SK-N-SH (cell line): ENCODE measurements at regions of chr2 and their contacts with region 1.

Region 1: GRCh38 chr2:160252278-160252887 is 52.3 kb upstream of the ITGB6 start:
- DNase-seq: peak; percentile 51
- H3K4me3 ChIP-seq: no peak overlapping the region
- H3K27ac ChIP-seq: no peak overlapping the region; a peak in 1 of 4 replicates
- H3K4me1 ChIP-seq: peaks cover 0 to 16% of the 10 kb centered on the region in 2 experiments; a peak in 2 of 4 replicates
- H3K27me3 ChIP-seq: no peaks in the 10 kb centered on the region
- CTCF ChIP-seq: peak; percentile 84
- EP300 ChIP-seq: no peak
- RAD21 ChIP-seq: peak; percentile 70

Region 2: DNA sequence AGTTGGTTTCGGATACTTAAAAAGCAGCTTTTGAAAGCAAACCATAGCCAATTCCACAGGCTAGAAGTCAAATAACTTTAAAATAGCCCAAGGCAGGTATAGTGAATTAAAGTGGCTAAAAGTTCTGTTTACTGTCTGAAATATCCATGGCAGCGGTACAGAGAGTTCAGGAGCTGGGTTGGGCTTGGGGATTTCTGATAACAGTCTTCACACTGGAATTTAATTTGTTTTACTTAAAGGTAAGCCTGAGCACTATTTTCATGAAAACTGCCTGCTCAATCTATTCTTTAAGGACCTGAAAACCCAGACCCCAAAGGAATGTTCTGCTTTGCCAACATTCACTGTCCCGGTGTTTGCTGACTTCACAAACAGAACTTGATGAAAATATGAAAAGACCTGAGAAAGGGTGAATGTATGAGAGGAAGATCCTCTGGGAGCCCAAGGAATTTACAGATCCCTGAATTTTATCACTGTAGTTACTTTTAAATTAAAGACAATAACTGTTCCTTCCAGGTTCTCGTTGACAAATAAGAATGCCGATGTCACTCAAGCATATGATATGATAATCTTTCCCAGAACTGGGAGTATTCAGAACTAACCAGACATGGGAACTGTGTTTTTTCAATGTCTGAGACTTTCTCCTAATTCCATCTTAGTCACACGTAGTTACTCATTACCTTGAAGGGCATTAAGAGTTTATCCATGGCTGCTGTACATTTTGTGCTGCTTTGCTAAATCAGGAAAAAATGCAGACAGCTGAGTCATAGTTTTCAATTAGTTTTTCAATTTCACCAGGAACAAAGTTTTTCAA is 24.1 kb before region 1 on chr2:
- CTCF ChIA-PET with region 1: interaction called, 10 read pairs
- POLR2A ChIA-PET with region 1: no interaction called
- DNase-seq: no peak
- H3K4me3 ChIP-seq: no peak overlapping the region
- H3K27ac ChIP-seq: peak overlapping the region; percentile 96 to 98
- H3K4me1 ChIP-seq: peaks cover 36 to 63% of the 10 kb centered on the region in 2 experiments
- H3K27me3 ChIP-seq: no peaks in the 10 kb centered on the region
- CTCF ChIP-seq: no peak
- EP300 ChIP-seq: peak; percentile 57 to 95
- RAD21 ChIP-seq: no peak

Region 3: GRCh38 chr2:160241251-160242137 is 10.9 kb before region 1 on chr2:
- CTCF ChIA-PET with region 1: interaction called, 32 read pairs
- POLR2A ChIA-PET with region 1: no interaction called
- DNase-seq: peak; percentile 45
- H3K4me3 ChIP-seq: no peak overlapping the region
- H3K27ac ChIP-seq: peak overlapping the region; percentile 87 to 93
- H3K4me1 ChIP-seq: peaks cover 19 to 24% of the 10 kb centered on the region in 2 experiments; a peak in 3 of 4 replicates
- H3K27me3 ChIP-seq: no peaks in the 10 kb centered on the region
- CTCF ChIP-seq: no peak
- EP300 ChIP-seq: peak; percentile 63 to 96; a peak in 3 of 4 replicates
- RAD21 ChIP-seq: no peak

Region 4: GRCh38 chr2:160278879-160279177 is 26.4 kb after region 1 on chr2:
- CTCF ChIA-PET with region 1: interaction called, 11 read pairs
- POLR2A ChIA-PET with region 1: no interaction called
- DNase-seq: peak; percentile 12
- H3K4me3 ChIP-seq: no peak overlapping the region; a peak in 1 of 4 replicates
- H3K27ac ChIP-seq: peak overlapping the region; percentile 65 to 81
- H3K4me1 ChIP-seq: peaks cover 9 to 43% of the 10 kb centered on the region in 2 experiments
- H3K27me3 ChIP-seq: no peaks in the 10 kb centered on the region
- CTCF ChIP-seq: peak; percentile 62
- EP300 ChIP-seq: no peak
- RAD21 ChIP-seq: peak; percentile 40

Region 5: DNA sequence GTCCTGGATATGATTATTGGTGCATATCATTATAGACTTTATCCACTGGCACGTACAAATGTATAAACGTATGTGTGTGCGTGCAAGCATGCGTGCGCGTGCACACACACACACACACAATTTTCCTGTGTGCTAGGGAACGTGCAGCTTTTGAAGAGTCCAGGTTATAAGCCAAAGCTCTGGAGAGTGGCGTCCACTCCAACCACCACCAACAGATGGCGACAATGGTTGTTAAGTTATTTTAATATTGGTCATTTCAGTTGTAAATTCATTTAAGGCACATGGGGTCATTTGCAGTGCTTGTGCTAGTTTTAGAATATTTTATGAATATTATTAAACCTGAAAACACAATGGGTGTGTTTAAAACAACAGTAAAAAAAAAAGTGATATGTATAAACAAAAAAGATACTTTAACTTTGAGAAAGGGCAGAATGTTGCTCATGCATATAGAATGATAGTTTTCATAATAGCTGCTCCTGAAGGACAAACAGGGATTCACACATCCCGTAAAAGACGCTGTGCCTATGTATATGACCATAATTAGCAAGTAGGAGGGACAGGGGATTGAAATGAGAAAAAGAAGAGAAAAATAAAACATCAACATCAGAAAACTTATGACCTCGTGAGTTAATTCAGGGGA is 71.9 kb after region 1 on chr2:
- CTCF ChIA-PET with region 1: interaction called, 13 read pairs
- POLR2A ChIA-PET with region 1: no interaction called
- DNase-seq: peak; percentile 39
- H3K4me3 ChIP-seq: no peak overlapping the region
- H3K27ac ChIP-seq: 0 out of 4 replicates have a peak overlapping the region, but pooled peaks of 1 of the 2 experiments have one; percentile 20
- H3K4me1 ChIP-seq: peaks cover 0 to 3% of the 10 kb centered on the region in 2 experiments; a peak in 3 of 4 replicates
- H3K27me3 ChIP-seq: no peaks in the 10 kb centered on the region
- CTCF ChIP-seq: peak; percentile 81
- EP300 ChIP-seq: no peak
- RAD21 ChIP-seq: peak; percentile 80